ENCODE measurements at regions of chr15 and their contacts with region 1.

Region 1: DNA sequence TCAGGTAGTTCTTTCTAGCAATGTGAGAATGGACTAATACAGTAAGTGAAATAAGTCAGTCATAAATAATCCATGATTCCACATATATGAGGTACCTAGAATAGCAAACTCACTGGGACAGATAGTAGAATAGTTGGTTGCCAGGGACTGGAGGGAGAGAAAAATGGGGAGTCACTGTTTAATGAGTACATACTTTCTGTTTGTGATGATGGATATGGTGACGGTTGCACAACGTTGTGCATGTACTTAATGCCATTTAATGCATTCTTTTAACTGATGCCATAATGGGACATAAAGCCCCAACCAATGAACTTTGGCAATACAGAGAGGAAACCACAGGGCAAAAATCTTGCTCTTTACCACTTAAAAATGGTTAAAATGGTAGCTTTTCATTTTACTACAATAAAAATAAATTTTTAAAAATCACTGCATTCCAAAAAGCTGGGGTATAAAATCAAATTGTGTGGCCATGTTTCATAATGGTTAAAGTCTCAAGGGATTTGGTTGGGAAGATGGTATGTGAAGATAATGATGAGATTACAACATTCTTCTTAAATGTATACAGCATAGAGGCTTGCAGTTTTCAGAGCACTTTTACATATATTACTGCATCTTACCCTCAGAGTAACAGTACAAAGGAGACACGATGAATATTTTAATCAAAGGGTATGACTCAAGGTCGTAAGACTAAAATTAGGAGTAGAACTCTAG is 45.2 kb downstream of the ADAM10 start:
- DNase-seq: no peak
- ATAC-seq: no peak
- H3K4me3 ChIP-seq: no peak overlapping the region
- H3K4me3 Mint-ChIP-seq: no peak overlapping the region
- H3K27ac ChIP-seq: no peak overlapping the region
- H3K27ac Mint-ChIP-seq: peak overlapping the region in 3 of 9 donors; percentile 34 to 84 (median 69)
- H3K4me1 ChIP-seq: no peaks in the 10 kb centered on the region
- H3K4me1 Mint-ChIP-seq: peaks cover 43 to 88% (median 79%) of the 10 kb centered on the region in 7 donors
- H3K27me3 ChIP-seq: no peaks in the 10 kb centered on the region
- H3K27me3 Mint-ChIP-seq: no peaks in the 10 kb centered on the region

Region 2: DNA sequence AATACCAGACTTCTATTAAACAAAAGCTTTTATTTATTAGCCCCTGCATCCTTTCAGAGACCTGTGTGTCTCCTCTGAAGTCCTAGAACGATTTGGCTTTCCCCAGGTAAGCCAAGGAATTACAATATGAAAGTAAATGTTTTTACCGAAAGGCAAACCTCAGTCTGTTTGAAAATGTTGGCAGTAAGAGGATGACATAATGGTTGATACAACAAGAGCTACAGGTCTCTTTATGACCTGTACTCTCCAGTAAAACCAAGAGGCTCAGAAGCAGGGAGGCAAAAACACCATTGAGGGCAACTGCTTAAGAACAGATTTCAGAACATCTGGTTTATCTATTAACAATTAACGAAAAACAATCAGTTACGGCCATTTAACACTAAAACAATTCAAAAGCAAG is 62.6 kb before region 1 on chr15:
- CTCF ChIA-PET with region 1: no interaction called
- POLR2A ChIA-PET with region 1: no interaction called
- intact Hi-C with region 1: loop called in 1 of 2 experiments (anchors 10 kb)
- DNase-seq: no peak
- ATAC-seq: no peak
- H3K4me3 ChIP-seq: no peak overlapping the region
- H3K4me3 Mint-ChIP-seq: no peak overlapping the region
- H3K27ac ChIP-seq: no peak overlapping the region
- H3K27ac Mint-ChIP-seq: peak overlapping the region in 7 of 9 donors; percentile 24 to 78 (median 53)
- H3K4me1 ChIP-seq: no peaks in the 10 kb centered on the region
- H3K4me1 Mint-ChIP-seq: peaks cover 7 to 19% (median 17%) of the 10 kb centered on the region in 7 donors
- H3K27me3 ChIP-seq: no peaks in the 10 kb centered on the region
- H3K27me3 Mint-ChIP-seq: no peaks in the 10 kb centered on the region

Measured in naive thymus-derived CD4-positive, alpha-beta T cell (primary cell).